Posterior cingulate gyrus (tissue), 11 donors: ENCODE measurements at regions of chr10 and their contacts with region 1.

Region 1: DNA sequence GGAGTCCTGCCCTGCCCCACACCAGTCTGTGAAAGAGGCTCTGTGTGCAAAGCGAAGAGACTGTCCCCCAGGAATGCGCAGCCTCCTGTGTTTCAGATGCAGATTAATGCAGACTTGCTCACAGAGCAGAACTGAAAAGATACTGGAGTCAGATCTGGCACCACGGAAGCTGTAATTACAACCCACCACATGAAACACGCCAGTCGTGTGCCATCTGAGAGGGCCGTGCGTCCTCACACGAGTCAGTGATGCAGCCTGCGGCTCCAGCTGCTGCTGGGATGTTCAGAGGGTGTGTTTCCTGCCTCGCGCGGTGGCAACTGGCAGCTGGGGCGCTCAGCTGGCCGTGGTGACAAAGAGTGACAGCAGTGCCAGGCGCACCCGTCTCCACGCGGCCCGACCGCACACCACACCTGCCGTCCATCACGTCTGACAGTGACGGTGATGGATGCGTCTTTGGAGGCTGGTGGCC is 50.0 kb downstream of the NKX6-2 start:
- DNase-seq: peak; percentile 75 to 98 (median 82)

Region 2: DNA sequence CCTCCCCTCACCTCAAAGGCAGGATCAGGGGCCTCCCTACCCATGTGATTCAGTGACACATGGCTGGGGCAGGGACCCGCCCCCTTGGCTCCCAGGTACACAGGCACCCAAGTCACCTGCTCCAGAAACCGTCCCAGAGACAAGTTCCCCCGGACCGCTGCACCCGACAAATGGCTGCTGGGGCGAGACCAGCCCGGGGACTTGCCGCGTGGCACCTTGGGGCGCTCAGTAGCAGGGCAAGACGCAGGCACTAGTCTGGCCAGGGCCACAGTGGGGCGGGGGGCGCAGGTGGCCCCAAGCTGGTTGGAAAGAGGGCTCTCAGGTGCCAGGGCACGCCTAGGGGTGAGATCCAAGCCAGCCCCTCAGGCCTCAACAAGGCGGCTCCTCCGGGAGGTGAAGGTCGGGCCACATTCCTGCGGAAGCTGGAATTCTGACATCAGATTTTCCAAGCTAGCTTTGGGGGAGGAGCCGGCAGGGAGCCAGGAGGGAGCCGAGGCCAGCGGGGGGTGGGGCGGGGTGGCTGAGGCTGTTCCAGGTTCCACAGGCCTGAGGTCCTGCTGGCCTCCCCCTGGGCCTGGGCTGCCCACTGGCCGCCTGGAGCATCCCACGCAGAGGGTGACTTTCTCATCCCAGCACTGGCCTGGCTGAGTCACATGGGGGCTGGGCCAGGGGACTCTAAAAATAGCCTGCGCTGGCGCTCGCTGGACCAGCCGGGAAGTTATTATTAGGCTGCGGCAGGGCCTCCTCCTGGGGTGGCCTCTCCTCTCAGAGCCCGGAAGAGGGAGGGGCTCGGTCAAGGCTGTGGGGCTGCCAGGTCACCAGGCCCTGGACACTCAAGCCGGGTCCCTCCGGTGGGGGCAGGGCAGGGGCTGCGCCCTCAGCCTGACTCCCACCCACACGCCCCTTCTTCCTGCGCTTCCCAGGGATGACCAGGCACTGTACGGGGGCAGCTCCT is 218.9 kb before region 1 on chr10:
- intact Hi-C with region 1: no loop called
- DNase-seq: peak; percentile 45 to 95 (median 66)

Region 3: GRCh38 chr10:132654702-132655661 is 81.0 kb before region 1 on chr10:
- intact Hi-C with region 1: loop called (anchors 10 kb)
- DNase-seq: peak; percentile 62 to 97 (median 80)

Region 4: GRCh38 chr10:132714096-132714721 is 21.7 kb before region 1 on chr10:
- intact Hi-C with region 1: loop called (anchors 2 kb)
- DNase-seq: peak; percentile 81 to 98 (median 89)

Region 5: DNA sequence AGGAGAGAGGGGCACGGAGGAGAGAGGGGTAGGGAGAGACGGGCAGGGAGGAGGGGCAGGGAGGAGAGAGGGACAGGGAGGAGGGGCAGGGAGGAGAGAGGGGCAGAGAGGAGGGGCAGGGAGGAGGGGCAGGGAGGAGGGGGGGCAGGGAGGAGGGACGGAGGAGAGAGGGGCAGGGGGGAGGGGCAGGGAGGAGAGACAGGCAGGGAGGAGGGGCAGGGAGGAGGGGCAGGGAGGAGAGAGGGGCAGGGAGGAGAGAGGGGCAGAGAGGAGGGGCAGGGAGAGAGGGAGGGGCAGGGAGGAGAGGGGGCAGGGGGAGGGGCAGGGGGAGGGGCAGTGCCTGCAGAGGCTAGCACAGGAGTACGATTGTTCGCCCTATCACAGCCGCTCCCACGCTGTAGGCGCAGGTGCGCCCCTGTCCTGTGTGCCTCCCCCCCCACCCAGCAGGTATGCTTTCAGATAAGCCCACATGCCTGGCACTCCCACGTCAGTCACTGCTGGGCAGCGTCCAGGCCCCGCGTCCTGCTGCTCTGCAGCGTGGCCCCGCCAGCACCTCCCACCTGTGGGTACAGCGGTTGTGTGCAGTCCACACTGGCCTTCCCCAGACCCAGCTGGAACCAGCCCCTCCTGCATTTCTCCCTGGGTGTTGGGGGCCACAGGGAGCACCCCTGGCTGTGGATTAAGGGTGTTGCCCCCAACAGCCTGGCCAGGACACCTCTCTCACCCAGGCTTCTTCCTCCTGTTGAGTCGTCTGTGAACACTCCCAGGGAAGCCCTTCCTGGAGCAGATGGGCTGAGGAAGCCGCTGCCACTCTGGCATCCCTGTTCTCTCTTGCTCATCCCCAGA is 39.2 kb after region 1 on chr10:
- intact Hi-C with region 1: loop called (anchors 2 kb)
- DNase-seq: peak in 4 of 10 donors; percentile 47 to 89 (median 72)

Region 6: DNA sequence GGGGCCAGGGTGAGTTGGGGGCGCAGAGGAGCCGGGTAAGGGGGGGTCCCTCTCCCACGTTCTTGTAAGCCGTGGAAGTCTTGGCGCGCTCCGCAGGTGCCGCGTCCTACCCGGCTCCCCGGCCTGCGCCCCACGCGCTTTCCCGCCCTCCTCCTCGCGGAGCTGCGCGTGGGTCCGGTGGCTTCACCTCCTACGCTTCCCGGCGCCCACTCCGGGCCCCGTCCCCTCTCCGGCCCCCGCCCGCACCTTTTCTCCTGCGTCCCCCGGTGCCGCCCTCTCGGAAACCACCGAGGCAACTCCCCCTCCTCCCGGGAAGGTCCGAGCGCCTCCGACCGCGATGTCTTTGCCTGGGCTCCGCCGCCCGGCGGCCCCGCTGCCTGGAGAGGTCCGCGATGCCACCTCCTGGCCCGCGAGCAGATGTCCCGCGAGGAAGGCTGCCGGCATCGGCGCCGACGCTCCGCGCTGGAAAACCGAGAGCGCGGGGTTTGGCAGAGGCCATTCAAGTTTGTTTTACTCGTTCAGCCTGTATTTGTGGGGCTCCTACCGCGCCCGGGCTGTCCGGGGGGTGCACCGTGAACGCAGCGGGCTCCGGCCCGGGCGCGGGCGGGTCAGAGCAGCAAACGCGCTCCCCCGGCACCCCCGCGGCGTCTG is 52.3 kb after region 1 on chr10:
- intact Hi-C with region 1: loop called (anchors 5 kb)
- DNase-seq: peak in 6 of 10 donors; percentile 49 to 95 (median 70)